ENCODE measurements at regions of chr16 and their contacts with region 1.

Region 1: GRCh38 chr16:49855280-49855821 is 561 bp downstream of the ZNF423 start:
- DNase-seq: peak; percentile 90
- H3K4me3 ChIP-seq: peak overlapping the region; percentile 87
- H3K27ac ChIP-seq: peak overlapping the region; percentile 97
- H3K4me1 ChIP-seq: peaks cover 73% of the 10 kb centered on the region
- H3K27me3 ChIP-seq: peaks cover 5% of the 10 kb centered on the region
- CTCF ChIP-seq: no peak

Region 2: DNA sequence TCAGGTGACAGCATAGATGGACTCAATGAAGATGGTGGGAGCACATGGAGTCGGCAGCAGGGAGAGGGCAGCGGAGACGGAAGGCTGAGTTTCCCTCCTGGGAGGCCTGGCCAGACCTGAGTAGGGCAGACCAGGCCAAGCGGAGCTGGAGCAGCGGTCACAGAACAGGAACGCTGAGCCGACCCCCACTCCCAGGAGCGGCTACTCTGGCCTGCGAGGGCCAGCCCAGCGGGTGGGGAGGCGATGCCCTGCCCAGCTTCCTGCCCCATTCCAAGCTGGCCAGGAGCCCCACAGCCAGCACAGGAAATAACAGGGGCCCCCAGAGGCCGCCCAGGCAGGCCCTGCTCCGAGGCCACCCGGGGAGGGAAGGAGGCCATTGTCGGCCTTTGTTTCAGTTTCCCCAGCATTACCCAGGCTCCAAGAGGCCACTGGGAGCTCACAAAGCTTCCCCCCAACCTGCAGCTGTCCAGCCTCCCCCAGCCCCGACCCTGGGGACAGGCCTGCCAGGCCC is 79.2 kb before region 1 on chr16:
- intact Hi-C with region 1: loop called (anchors 10 kb)
- DNase-seq: peak; percentile 40
- H3K4me3 ChIP-seq: peak overlapping the region; percentile 35
- H3K27ac ChIP-seq: peak overlapping the region; percentile 77
- H3K4me1 ChIP-seq: peaks cover 66% of the 10 kb centered on the region
- H3K27me3 ChIP-seq: no peaks in the 10 kb centered on the region
- CTCF ChIP-seq: no peak

Measured in left ventricle myocardium inferior (tissue), 1 donor.